Activated T-helper 2 cell treated with anti-CD3 and anti-CD28 coated beads, Interferon-gamma antibody, Interleukin-2, Interleukin-4, amounts not matched to agents 10 μg/mL and 5 μg/mL and 100 μg/mL, durations not matched to agents 14 hours and 24 hours and 36 hours (primary cell): ENCODE measurements at regions of chr2 and their contacts with region 1.

Region 1: GRCh38 chr2:239267288-239267951 is 133.4 kb downstream of the HDAC4 start:
- DNase-seq: peak; percentile 91
- H3K4me3 Mint-ChIP-seq: peak overlapping the region; percentile 82
- H3K27ac Mint-ChIP-seq: peak overlapping the region; percentile 82
- H3K4me1 Mint-ChIP-seq: peaks cover 73% of the 10 kb centered on the region
- H3K27me3 Mint-ChIP-seq: peaks cover 5% of the 10 kb centered on the region

Region 2: GRCh38 chr2:238667008-238667407 is 600.4 kb before region 1 on chr2:
- intact Hi-C with region 1: no loop called
- DNase-seq: no peak
- H3K4me3 Mint-ChIP-seq: no peak overlapping the region
- H3K27ac Mint-ChIP-seq: no peak overlapping the region
- H3K4me1 Mint-ChIP-seq: peaks cover 3% of the 10 kb centered on the region
- H3K27me3 Mint-ChIP-seq: peaks cover 9% of the 10 kb centered on the region

Region 3: DNA sequence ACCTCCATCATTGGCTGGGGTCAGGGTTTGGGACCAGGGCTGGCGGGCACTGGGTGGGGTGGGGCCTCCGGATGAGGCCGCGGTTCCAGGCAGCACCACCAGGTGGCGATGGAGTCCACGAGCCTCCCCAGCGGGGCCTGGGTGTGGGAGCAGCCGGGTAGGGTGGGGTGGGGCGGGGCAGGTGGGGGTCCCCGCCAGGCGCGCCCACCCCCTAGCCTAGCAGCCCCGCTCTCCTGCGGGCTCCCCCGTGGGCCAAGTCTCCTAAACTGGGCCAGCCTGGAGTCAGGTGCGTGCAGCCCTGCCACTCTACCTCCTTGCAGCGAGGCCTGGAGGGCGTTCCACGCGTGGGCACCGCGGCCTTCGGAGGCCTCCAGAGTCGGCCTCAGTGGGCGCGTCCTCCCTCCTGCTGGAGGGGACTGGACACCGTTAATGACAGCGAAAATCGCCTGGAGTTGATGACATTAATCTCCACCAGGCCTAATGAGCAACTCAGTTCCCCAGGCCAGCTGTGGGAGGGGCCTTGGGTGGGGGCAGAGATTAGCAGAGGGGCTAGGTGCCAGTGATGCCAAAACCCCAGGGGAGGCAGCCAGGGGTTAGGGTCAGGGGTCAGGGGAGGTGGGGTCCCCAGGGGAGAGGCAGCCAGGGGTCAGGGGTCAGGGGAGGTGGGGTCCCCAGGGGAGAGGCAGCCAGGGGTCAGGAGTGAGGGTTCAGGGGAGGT is 231.9 kb before region 1 on chr2:
- intact Hi-C with region 1: loop called (anchors 10 kb)
- DNase-seq: peak; percentile 43
- H3K4me3 Mint-ChIP-seq: no peak overlapping the region
- H3K27ac Mint-ChIP-seq: no peak overlapping the region
- H3K4me1 Mint-ChIP-seq: no peaks in the 10 kb centered on the region
- H3K27me3 Mint-ChIP-seq: peaks cover 21% of the 10 kb centered on the region

Region 4: GRCh38 chr2:239169311-239170048 is 97.9 kb before region 1 on chr2:
- intact Hi-C with region 1: loop called (anchors 5 kb)
- DNase-seq: no peak
- H3K4me3 Mint-ChIP-seq: no peak overlapping the region
- H3K27ac Mint-ChIP-seq: no peak overlapping the region
- H3K4me1 Mint-ChIP-seq: peaks cover 20% of the 10 kb centered on the region
- H3K27me3 Mint-ChIP-seq: no peaks in the 10 kb centered on the region

Region 5: DNA sequence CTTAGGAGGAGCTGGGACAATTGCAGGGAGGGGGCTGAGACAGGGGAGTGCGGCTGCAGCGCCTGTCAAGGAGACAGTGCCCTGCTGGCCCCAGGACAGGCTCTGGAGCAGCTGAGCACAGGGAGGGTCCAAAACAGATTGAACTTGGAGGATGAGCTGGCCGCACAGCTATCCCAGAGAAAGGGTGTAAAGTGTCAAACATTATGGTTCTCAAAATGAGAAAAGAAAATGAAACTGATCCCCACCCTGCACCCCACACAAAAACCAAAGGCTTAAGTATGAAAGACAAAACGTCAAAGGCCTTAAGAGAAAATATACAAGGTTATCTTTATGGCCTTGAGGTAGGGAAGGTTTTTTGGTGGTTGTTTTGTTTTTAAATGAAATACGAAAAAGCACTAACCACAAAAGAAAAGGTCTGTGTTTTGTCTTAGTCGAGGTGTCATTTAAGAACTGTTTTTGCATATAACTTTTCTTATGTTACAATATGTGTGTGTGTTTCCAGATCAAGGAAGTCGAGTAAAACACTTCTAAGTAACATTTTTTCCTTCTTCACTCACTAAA is 21.6 kb after region 1 on chr2:
- intact Hi-C with region 1: loop called (anchors 1 kb)
- DNase-seq: peak; percentile 48
- H3K4me3 Mint-ChIP-seq: peak overlapping the region; percentile 72
- H3K27ac Mint-ChIP-seq: peak overlapping the region; percentile 98
- H3K4me1 Mint-ChIP-seq: peaks cover 65% of the 10 kb centered on the region
- H3K27me3 Mint-ChIP-seq: no peaks in the 10 kb centered on the region

Region 6: DNA sequence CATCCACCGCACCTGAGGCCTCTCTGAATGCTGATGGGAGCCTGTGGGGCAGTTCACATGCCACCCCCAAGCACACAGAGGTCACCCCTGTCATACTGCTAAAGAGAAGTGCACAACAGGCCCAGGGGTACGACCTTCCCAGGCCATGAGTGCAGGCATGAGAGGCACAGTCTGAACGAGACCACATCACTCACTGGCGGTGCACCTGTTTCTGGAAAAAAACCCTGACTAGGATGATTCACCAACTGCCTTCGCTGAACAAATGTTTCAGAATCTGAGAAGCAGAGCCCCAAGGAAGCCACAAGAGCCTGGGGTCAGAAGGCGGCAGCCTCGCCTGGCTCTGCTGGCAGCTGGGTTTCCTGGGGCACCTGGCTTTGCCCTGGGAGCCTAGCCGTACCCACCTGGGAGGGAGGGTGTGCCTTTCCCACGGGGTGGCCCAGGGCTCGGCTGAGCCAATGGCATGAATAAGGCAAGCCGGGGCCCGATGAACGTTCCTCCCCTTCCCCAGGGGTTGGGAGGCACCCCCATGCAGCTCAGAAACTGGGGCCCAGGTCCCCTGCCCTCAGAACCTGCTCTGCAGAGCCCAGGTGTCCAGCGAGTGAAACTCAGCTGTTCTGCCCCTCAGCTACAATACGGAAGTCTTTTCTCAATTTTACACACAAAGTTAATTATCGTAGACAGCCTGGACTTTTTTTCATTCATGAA is 59.6 kb after region 1 on chr2:
- intact Hi-C with region 1: loop called (anchors 2 kb)
- DNase-seq: peak; percentile 71
- H3K4me3 Mint-ChIP-seq: peak overlapping the region; percentile 40
- H3K27ac Mint-ChIP-seq: peak overlapping the region; percentile 90
- H3K4me1 Mint-ChIP-seq: peaks cover 73% of the 10 kb centered on the region
- H3K27me3 Mint-ChIP-seq: no peaks in the 10 kb centered on the region

Region 7: DNA sequence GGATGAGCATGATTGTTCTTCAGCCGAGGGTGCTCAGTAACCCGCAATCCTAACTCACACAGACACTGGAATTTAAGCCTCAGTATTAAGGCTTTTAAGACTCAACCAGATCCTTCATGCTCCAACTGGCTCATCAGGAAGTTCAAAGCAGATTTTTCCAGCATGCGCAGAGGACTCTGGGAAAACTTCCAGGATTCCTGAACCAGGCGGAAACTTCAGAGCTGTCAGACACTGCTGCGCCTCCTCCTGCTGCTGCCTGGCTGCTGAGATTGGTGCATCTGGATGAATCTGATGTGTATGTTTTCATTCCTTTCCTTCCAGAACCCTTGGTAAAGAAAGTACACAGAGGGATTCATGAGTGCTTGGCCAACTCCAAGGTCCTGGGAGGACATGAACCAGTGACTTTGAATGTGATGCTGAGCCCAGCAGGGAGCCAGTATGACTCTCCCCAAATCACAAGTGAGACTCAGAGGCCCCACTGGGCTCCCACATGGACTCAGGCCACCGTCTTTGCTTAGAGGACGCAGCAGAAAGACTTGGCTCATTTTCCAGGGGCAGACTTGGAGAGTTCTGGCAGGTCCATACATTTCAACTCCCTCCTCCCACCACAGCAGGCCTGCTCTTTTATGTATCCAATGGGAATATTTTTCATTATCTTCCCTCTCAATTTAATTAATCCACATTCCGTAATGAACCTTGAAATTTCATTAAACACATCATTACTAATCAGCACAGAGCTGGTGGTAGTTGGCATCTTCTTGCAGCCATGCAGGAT is 276.9 kb after region 1 on chr2:
- intact Hi-C with region 1: loop called (anchors 5 kb)
- DNase-seq: no peak
- H3K4me3 Mint-ChIP-seq: no peak overlapping the region
- H3K27ac Mint-ChIP-seq: peak overlapping the region; percentile 61
- H3K4me1 Mint-ChIP-seq: peaks cover 49% of the 10 kb centered on the region
- H3K27me3 Mint-ChIP-seq: peaks cover 8% of the 10 kb centered on the region